Activated CD8-positive, alpha-beta T cell treated with anti-CD3 and anti-CD28 coated beads for 36 hours (primary cell): ENCODE measurements at regions of chr22 and their contacts with region 1.

Region 1: DNA sequence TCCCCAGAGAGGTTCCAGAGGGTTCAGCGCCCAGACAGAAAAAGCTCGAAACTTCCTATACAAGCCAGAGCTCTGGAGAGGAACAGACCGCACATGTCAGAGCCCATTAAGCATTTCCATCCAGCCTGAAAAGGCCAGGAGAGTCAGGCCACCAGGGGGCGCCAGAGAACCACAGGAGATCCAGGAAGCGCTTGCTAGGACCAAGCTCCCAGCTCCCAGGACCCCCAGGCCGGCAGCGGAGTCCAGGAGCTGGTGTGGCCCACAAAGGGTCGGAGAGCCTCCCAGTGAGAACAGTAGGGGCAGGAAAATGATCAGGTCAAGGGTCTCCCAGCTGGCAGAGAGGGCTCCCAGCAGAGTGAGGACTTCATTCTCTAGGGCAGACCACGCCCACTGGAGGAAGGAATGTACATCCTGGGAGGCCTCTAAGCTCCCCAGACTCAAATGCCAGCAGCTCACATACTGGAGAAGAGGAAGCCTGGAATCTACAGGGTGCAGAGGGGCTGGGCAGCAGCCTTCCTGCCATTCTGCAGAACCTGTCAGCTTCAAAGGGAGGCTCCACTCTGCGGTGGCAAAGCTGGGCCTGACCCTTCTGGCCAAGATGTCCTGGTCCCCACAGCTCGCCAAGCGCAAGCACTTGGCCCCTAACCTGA is 2.1 kb upstream of the MEI1 start:
- DNase-seq: peak; percentile 97
- ATAC-seq: peak; percentile 80
- H3K4me3 Mint-ChIP-seq: no peak overlapping the region
- H3K27ac Mint-ChIP-seq: peak overlapping the region; percentile 47
- H3K4me1 Mint-ChIP-seq: peaks cover 10% of the 10 kb centered on the region
- H3K27me3 Mint-ChIP-seq: no peaks in the 10 kb centered on the region
- CTCF ChIP-seq: peak; percentile 98

Region 2: GRCh38 chr22:41656556-41656955 is 40.7 kb before region 1 on chr22:
- CTCF ChIA-PET with region 1: interaction called, 10 read pairs
- POLR2A ChIA-PET with region 1: no interaction called
- intact Hi-C with region 1: no loop called
- DNase-seq: no peak
- ATAC-seq: no peak
- H3K4me3 Mint-ChIP-seq: no peak overlapping the region
- H3K27ac Mint-ChIP-seq: no peak overlapping the region
- H3K4me1 Mint-ChIP-seq: no peaks in the 10 kb centered on the region
- H3K27me3 Mint-ChIP-seq: no peaks in the 10 kb centered on the region
- CTCF ChIP-seq: no peak

Region 3: GRCh38 chr22:41722496-41722895 is 25.2 kb after region 1 on chr22:
- CTCF ChIA-PET with region 1: interaction called, 11 read pairs
- POLR2A ChIA-PET with region 1: no interaction called
- intact Hi-C with region 1: no loop called
- DNase-seq: no peak
- ATAC-seq: no peak
- H3K4me3 Mint-ChIP-seq: no peak overlapping the region
- H3K27ac Mint-ChIP-seq: no peak overlapping the region
- H3K4me1 Mint-ChIP-seq: no peaks in the 10 kb centered on the region
- H3K27me3 Mint-ChIP-seq: no peaks in the 10 kb centered on the region
- CTCF ChIP-seq: no peak

Region 4: DNA sequence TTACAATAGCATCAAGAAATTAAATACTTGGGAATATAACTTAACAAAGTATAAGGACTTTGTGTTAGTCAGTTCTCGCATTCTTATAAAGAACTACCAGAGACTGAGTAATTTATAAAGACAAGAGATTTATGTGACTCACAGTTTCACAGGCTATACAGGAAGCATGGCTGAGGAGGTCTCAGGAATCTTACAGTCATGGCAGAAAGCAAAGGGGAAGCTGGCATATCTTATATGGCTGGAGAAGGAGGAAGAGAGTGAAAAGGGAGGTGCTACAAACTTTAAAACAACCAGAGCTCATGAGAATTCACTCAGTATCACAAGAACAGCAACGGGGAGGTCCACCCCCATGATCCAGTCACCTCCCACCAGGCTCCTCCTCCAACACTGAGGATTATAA is 71.2 kb after region 1 on chr22:
- CTCF ChIA-PET with region 1: interaction called, 21 read pairs
- POLR2A ChIA-PET with region 1: interaction called, 5 read pairs
- intact Hi-C with region 1: no loop called
- DNase-seq: no peak
- ATAC-seq: peak; percentile 76
- H3K4me3 Mint-ChIP-seq: no peak overlapping the region
- H3K27ac Mint-ChIP-seq: peak overlapping the region; percentile 43
- H3K4me1 Mint-ChIP-seq: peaks cover 5% of the 10 kb centered on the region
- H3K27me3 Mint-ChIP-seq: no peaks in the 10 kb centered on the region
- CTCF ChIP-seq: no peak

Region 5: DNA sequence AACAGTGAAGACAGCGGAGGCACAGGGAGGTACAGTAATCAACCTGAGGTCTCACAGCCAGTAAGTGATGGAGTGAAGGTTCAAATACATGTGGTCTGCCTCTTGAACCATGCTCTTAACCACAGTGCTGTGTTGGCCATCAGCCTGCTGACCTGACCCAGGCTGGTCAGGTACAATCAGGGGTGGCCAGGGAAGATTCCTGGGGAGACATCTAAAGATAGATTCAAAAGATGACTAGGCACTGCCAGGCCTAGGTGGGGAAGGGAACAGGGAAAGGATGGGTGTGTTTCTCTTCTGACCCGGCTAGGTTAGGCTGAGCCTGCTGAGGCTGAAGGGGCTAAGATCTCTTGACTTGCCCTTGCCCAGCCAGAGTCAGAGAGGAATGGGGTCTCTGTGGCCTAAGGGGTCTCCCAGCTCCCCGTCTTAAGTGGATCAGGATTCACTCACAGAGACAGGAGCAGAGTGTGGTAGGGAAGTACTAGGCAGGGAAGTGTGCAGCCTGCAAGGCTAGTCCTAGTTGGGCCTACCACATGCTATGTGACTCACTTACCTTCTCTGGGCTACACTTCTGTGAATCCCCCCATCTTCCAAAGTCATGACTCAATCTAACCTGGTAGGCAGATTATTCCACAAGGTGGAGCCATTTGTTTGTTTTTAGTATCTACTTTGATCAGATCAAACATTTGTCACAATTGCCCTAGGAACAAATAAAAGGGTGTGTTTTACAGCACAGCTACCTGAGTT is 125.2 kb after region 1 on chr22:
- CTCF ChIA-PET with region 1: interaction called, 10 read pairs
- POLR2A ChIA-PET with region 1: no interaction called
- intact Hi-C with region 1: no loop called
- DNase-seq: peak; percentile 65
- ATAC-seq: peak; percentile 99
- H3K4me3 Mint-ChIP-seq: no peak overlapping the region
- H3K27ac Mint-ChIP-seq: peak overlapping the region; percentile 84
- H3K4me1 Mint-ChIP-seq: peaks cover 29% of the 10 kb centered on the region
- H3K27me3 Mint-ChIP-seq: no peaks in the 10 kb centered on the region
- CTCF ChIP-seq: peak; percentile 73

Region 6: GRCh38 chr22:41848468-41848867 is 151.2 kb after region 1 on chr22:
- CTCF ChIA-PET with region 1: no interaction called
- POLR2A ChIA-PET with region 1: no interaction called
- intact Hi-C with region 1: no loop called
- DNase-seq: no peak
- ATAC-seq: no peak
- H3K4me3 Mint-ChIP-seq: no peak overlapping the region
- H3K27ac Mint-ChIP-seq: no peak overlapping the region
- H3K4me1 Mint-ChIP-seq: peaks cover 58% of the 10 kb centered on the region
- H3K27me3 Mint-ChIP-seq: no peaks in the 10 kb centered on the region
- CTCF ChIP-seq: no peak

Region 7: DNA sequence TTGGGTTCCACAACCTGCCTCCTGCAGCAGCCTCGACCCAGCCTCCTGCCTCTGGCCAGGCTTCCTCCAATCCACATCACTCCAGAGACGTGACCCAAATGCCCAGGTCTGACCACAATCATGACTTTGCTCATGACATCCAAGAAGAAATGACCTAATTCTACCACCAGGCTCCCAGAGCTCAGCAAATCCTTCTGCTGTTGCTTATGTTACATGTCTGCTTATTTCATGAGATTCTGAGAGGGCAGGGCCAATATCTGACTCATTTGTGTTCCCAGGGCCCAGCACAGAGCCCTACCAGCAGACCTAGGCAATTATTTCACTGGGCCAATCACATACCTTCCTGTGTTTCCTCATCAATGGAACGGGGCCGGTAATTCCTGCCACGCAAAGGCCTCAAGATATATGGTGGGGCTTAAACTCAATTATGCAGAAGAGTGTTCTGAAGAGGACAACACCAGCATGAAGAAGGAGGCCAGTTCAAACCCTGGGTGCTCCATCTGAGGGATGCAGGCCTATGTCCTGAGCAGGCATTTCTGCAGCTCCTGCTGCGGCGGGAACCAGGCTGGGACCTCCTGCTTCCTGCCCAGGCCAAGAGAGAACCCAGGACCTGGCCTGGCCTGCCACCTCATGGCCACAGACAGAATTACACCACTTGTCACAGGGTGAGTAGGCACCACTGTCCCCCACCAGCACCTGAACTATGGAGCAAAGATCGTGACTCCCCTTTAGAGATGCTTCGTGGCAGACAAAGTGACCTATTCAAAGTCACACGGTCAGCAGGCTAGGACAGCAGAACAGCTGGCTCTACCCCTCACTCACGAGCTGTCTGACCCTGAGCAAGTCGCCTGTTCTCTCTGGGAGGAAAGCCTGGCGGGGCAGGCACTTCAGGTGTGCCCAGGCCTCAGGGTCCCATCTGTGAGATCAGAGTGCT is 243.8 kb after region 1 on chr22:
- CTCF ChIA-PET with region 1: interaction called, 43 read pairs
- POLR2A ChIA-PET with region 1: interaction called, 8 read pairs
- intact Hi-C with region 1: loop called (anchors 5 kb)
- DNase-seq: peak; percentile 91
- ATAC-seq: peak; percentile 75
- H3K4me3 Mint-ChIP-seq: peak overlapping the region; percentile 74
- H3K27ac Mint-ChIP-seq: peak overlapping the region; percentile 100
- H3K4me1 Mint-ChIP-seq: peaks cover 58% of the 10 kb centered on the region
- H3K27me3 Mint-ChIP-seq: no peaks in the 10 kb centered on the region
- CTCF ChIP-seq: peak; percentile 94